Activated CD4-positive, alpha-beta T cell treated with anti-CD3 and anti-CD28 coated beads, Interleukin-2, amount 10 ng/mL, durations not matched to agents 24 days and 14 days (primary cell): ENCODE measurements at regions of chr5 and their contacts with region 1.

Region 1: DNA sequence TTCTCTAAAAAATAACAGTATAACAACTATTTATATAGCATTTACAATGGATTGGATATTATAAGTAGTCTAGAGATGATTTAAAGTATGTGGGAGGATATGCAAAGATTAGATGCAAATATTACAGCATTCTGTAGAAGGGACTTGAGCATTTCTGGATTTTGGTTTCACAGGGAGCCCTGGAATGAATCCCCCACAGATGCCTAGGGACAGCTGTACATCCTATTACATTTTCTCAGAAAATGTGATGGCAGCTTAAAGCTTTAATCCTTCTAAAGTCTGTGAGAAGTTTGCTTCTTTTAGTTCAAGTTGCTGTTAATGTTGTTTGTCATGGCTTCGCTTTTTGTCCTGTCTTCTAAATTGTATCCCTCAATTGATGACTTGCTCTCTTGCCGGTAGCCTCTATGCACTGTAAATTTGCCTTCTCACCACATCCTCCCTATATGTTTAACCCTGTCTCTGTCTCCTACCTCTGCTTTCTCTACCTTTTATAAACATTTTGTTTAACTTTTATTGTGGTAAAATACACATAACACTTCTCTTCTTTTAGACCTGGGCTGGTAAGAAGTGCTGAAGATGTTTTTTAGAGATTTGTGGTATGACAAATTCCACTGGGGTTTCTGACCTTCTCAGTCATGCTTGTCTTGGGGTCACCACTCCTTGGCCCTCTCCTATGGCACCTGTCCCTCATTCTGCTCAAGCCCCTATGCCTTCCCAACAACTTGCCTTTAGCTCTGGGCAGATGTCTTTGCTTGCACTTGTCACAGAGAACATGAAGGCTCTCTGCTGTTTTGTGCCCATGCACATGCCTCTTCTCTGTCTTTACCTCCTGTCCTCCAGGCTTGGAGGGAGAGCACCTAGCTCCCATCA is 37.9 kb downstream of the LNPEP start:
- DNase-seq: no peak
- H3K4me3 Mint-ChIP-seq: peak overlapping the region; percentile 7
- H3K27ac Mint-ChIP-seq: peak overlapping the region; percentile 68
- H3K4me1 Mint-ChIP-seq: peaks cover 40% of the 10 kb centered on the region
- H3K27me3 Mint-ChIP-seq: no peaks in the 10 kb centered on the region

Region 2: GRCh38 chr5:96946381-96946780 is 27.4 kb before region 1 on chr5:
- intact Hi-C with region 1: no loop called
- DNase-seq: peak; percentile 8
- H3K4me3 Mint-ChIP-seq: no peak overlapping the region
- H3K27ac Mint-ChIP-seq: no peak overlapping the region
- H3K4me1 Mint-ChIP-seq: peaks cover 45% of the 10 kb centered on the region
- H3K27me3 Mint-ChIP-seq: no peaks in the 10 kb centered on the region

Region 3: DNA sequence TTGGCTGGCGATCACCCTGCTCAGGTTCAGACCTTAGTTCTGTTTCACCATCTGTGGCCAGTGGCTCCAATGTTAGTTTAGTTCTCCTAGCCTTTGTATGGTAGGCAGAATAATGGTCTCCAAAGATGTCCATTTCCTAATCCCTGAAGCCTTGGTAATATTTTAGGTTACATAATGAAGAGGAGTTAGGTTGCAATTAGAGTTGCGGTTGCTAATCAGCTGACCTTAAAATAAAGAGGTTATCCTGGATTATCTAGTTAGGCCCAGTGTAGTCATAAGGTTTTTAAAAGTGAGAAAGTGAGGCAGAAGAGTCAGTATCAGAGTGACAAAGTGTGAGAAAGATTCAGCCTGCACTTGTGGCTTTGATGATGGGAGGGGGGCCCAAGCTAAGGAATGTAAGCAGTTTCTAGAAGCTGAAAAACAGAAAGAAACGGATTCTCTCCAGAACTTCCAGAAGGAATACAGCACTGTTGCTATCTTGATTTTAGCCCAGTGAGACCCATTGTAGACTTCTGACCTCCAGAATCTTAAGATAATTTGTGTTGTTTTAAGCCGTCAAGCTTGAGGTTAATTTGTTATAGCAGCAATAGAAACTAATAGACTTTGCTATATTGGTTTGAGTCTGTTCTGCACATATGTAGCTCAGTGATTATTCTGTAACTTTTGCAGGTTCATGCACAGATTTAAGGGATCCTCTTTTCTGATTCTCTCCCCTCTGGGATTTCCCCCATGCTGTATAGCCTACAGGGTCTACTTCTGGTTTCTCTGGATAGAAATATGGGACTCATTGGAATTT is 16.3 kb before region 1 on chr5:
- intact Hi-C with region 1: loop called (anchors 2 kb)
- DNase-seq: no peak
- H3K4me3 Mint-ChIP-seq: peak overlapping the region; percentile 58
- H3K27ac Mint-ChIP-seq: peak overlapping the region; percentile 84
- H3K4me1 Mint-ChIP-seq: peaks cover 61% of the 10 kb centered on the region
- H3K27me3 Mint-ChIP-seq: no peaks in the 10 kb centered on the region

Region 4: DNA sequence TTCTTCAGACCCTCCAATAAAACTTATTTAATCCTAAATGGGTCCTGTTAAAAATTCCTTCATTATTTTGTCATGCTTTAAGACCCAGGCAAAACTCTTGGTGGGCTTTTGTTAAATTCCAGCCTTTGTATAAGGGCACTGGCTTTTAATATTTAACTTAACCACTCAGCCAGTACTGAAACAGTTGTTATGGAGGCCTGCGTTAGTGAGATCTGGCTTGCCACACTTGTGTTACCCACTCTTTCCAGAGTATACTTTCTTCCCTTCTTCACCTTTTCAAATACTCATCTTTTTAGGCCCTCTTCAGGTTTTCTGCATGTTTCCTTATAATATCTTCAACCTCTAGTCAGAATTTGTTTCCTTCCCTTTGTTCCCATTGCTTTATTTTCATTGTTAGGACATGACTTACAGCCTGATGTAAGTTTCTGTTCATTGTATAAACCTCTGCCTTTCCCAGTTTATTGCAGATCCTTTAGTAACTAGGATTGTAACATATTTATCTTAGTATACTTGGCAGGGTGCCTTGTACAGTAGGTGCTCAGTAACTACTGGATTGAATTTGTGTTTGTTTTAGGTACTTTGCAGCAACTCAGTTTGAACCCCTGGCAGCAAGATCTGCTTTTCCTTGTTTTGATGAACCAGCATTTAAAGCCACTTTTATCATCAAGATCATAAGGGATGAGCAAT is 10.9 kb after region 1 on chr5:
- intact Hi-C with region 1: loop called (anchors 1 kb)
- DNase-seq: no peak
- H3K4me3 Mint-ChIP-seq: no peak overlapping the region
- H3K27ac Mint-ChIP-seq: peak overlapping the region; percentile 4
- H3K4me1 Mint-ChIP-seq: peaks cover 23% of the 10 kb centered on the region
- H3K27me3 Mint-ChIP-seq: no peaks in the 10 kb centered on the region